AG04450 (cell line): ENCODE measurements at regions of chr16 and their contacts with region 1.

Region 1: GRCh38 chr16:12132850-12133440 is 156.4 kb downstream of the SNX29 start:
- DNase-seq: no peak
- H3K4me3 ChIP-seq: no peak overlapping the region
- H3K27ac ChIP-seq: no peak overlapping the region
- H3K27me3 ChIP-seq: no peaks in the 10 kb centered on the region
- CTCF ChIP-seq: no peak

Region 2: DNA sequence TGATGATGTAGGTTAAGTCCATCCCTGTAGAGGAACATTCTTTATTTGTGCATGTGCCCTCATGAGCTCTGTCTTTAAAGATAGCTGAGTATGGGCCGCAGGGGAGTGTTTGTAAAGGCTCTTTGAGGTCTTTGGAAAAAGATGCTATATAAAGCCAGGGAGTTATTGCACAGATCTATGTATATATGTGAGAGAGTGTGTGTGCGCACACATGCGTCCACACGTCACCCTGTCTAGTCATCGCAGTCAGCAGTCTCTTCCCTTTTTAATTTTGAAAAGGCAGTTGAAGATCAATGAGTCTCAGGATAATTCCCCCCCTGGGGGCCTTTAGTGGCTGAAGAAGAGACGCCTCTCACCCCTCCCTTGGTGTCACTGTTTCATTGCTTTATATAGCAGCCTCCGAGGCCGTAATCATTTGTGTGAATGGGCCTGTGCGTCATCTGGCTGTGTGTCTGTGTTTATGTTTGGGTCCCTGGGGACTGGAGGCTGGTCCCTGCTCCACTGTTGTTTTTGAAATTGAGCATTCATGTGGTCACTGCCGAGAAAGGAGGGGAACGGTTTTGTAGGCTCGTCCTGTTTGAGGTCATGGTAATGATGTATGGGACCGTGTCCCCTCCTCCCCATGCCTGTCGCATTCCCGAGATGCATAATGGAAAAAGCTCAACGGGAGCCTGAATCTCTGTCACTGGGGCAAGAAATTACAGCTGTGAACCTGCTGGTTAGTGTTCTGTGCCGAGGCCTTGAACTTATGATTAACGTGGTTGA is 12.5 kb before region 1 on chr16:
- CTCF ChIA-PET with region 1: interaction called, 3 read pairs
- POLR2A ChIA-PET with region 1: interaction called, 11 read pairs
- DNase-seq: no peak
- H3K4me3 ChIP-seq: no peak overlapping the region
- H3K27ac ChIP-seq: peak overlapping the region; percentile 39
- H3K27me3 ChIP-seq: no peaks in the 10 kb centered on the region
- CTCF ChIP-seq: no peak